WTC11 (cell line): ENCODE measurements at regions of chr7 and their contacts with region 1.

Region 1: DNA sequence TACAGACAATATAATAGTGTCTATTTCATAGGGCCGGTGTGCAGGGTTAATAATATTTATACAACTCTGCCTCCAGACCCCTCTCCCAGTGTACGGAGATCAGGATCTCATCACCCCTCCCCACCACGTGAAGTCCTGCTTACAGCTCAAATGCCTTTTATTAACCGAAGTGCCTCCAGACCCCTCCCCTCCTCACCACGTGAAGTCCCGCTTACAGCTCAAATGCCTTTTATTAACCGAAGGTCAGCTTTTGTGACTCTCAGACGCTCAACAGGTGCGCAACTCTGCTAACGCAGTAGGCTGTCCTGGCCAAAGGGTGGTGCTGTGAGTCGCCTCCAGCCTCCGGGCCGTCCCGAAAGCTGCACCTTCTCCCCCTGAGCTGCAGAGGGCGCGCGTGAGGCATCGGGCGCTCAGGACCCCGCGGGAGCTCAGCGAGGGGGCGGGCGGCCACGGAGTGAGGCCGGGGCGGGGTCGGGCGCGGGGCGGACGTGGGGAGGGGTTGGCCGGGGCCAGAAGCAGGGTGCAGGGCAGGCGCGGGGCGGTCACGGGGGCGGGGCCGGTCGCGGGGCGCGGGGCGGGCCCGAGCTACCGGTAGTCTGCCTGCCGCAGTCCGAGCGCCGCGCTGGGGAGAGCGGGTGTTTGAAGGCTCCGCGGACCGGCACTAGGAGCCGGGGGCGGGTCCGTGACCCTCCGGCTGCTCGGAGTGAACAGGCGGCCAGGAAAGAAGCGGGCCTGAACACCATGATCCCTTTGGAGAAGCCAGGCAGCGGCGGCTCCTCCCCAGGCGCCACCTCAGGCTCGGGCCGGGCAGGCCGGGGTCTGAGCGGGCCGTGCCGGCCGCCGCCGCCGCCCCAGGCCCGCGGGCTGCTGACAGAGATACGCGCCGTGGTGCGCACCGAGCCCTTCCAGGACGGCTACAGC is at the start of gene STK17A:
- DNase-seq: peak; percentile 92
- ATAC-seq: peak; percentile 93
- H3K4me3 Mint-ChIP-seq: peak within 1 kb of the TSS; percentile 85
- H3K27ac Mint-ChIP-seq: no peak within 1 kb of the TSS
- H3K4me1 Mint-ChIP-seq: peaks cover 41% of the 10 kb centered on the region
- H3K27me3 Mint-ChIP-seq: peaks cover 8% of the 10 kb centered on the region
- CTCF ChIP-seq: peak; percentile 91
- total RNA-seq, gene STK17A: 12.2 to 17.6 TPM (median 15.1 TPM) in 3 replicates

Region 2: DNA sequence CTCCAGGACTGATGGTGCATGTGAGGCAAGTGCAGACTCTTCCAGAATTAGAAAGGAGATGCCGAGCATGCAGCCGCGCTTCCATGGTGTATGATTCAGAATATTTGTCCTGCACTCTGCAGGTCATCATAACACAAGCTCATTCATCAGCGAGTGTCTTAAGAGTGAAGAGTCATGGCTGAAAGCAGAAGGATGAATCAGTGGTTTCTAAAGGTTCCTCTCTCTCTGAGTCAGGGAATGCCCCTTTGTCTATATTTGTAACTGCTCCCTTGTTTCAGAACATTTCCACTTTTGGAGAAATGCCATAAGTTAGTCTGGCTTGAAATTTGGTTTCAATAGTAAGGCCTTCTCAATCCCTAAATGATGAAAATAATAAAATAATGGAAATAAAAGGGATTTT is 418.0 kb before region 1 on chr7:
- CTCF ChIA-PET with region 1: no interaction called
- POLR2A ChIA-PET with region 1: no interaction called
- DNase-seq: no peak
- ATAC-seq: no peak
- H3K4me3 Mint-ChIP-seq: no peak overlapping the region
- H3K27ac Mint-ChIP-seq: no peak overlapping the region
- H3K4me1 Mint-ChIP-seq: peaks cover 2% of the 10 kb centered on the region
- H3K27me3 Mint-ChIP-seq: no peaks in the 10 kb centered on the region
- CTCF ChIP-seq: no peak

Region 3: DNA sequence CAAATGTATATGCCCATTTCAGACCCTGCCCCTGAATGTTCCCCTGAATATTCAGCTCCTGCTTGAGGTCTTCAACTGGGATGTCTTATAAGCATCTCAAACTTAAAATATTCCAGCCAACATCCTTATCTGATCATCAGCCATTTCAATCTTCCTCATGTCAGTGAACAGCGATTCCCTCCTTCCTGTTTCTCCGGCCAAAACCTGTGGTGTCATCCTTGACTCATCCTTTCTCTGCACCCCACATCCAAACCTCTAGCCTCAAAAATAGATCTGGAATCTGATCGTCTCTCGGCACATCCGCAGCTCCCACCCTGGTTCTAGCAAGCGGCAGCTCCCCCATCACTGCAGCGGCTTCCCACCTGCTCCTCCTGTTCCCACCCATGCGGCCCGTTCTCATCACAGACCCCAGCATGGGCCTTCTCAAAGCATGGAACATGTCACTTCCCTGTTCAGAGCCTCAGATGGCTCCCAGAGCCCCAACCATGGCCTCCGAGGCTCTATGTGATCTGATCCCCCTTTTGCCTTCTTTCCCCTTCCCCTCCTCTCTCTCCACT is 304.6 kb before region 1 on chr7:
- CTCF ChIA-PET with region 1: no interaction called
- POLR2A ChIA-PET with region 1: no interaction called
- DNase-seq: no peak
- ATAC-seq: no peak
- H3K4me3 Mint-ChIP-seq: no peak overlapping the region
- H3K27ac Mint-ChIP-seq: no peak overlapping the region
- H3K4me1 Mint-ChIP-seq: peaks cover 26% of the 10 kb centered on the region
- H3K27me3 Mint-ChIP-seq: peaks cover 4% of the 10 kb centered on the region; the same call in 1 of the 2 replicates
- CTCF ChIP-seq: no peak

Region 4: GRCh38 chr7:43405948-43406347 is 176.8 kb before region 1 on chr7:
- CTCF ChIA-PET with region 1: no interaction called
- POLR2A ChIA-PET with region 1: no interaction called
- DNase-seq: no peak
- ATAC-seq: peak; percentile 72
- H3K4me3 Mint-ChIP-seq: no peak overlapping the region
- H3K27ac Mint-ChIP-seq: no peak overlapping the region
- H3K4me1 Mint-ChIP-seq: peaks cover 26% of the 10 kb centered on the region
- H3K27me3 Mint-ChIP-seq: peaks cover 3% of the 10 kb centered on the region; the same call in 1 of the 2 replicates
- CTCF ChIP-seq: no peak

Region 5: GRCh38 chr7:43439631-43440401 is 142.9 kb before region 1 on chr7:
- CTCF ChIA-PET with region 1: interaction called, 11 read pairs
- POLR2A ChIA-PET with region 1: no interaction called
- DNase-seq: peak; percentile 79
- ATAC-seq: peak; percentile 94
- H3K4me3 Mint-ChIP-seq: no peak overlapping the region
- H3K27ac Mint-ChIP-seq: no peak overlapping the region
- H3K4me1 Mint-ChIP-seq: peaks cover 29% of the 10 kb centered on the region
- H3K27me3 Mint-ChIP-seq: no peaks in the 10 kb centered on the region; the same call in 1 of the 2 replicates
- CTCF ChIP-seq: peak; percentile 96

Region 6: DNA sequence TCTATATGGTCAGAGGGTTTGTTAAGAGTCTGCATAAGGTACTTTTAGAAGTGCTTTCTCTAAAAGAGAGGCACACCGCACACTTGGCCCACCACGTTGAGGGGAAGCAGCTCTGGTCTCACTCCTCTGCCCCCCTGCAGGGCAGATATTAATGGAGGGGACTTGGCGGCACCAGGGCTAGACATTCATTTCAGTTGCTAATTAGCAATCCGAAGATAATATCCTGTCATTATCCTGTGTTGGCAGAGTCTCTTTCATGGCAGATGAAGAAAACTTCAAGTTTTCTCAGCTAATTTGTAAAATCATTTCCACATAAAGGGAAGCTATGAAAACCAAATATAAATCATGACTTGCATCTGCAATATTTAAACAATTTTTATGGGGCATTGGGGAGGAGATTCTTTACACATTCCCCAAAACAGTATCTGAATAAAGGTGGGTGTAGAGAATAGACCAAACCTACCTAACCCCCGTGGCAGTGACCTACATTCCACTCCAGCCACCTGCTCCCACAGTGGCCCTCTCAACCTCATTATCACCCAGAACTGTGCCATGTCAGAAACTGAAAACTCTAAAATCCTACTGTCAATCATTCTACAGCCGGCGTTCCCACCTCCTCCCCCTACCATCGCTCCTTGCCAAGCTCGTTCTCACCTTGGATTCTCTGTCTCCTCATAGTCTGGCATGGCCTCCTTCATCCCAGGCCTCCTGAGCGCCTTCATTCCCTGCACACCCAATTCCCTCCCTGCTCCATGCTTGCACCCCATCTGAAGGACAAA is 54.0 kb before region 1 on chr7:
- CTCF ChIA-PET with region 1: interaction called, 13 read pairs
- POLR2A ChIA-PET with region 1: interaction called, 3 read pairs
- DNase-seq: no peak
- ATAC-seq: no peak
- H3K4me3 Mint-ChIP-seq: no peak overlapping the region
- H3K27ac Mint-ChIP-seq: no peak overlapping the region
- H3K4me1 Mint-ChIP-seq: peaks cover 9% of the 10 kb centered on the region; the same call in 1 of the 2 replicates
- H3K27me3 Mint-ChIP-seq: no peaks in the 10 kb centered on the region
- CTCF ChIP-seq: no peak

Region 7: GRCh38 chr7:43602271-43602670 is 19.5 kb after region 1 on chr7:
- CTCF ChIA-PET with region 1: interaction called, 15 read pairs
- POLR2A ChIA-PET with region 1: no interaction called
- DNase-seq: no peak
- ATAC-seq: no peak
- H3K4me3 Mint-ChIP-seq: no peak overlapping the region
- H3K27ac Mint-ChIP-seq: no peak overlapping the region
- H3K4me1 Mint-ChIP-seq: no peaks in the 10 kb centered on the region
- H3K27me3 Mint-ChIP-seq: no peaks in the 10 kb centered on the region
- CTCF ChIP-seq: no peak

Region 8: DNA sequence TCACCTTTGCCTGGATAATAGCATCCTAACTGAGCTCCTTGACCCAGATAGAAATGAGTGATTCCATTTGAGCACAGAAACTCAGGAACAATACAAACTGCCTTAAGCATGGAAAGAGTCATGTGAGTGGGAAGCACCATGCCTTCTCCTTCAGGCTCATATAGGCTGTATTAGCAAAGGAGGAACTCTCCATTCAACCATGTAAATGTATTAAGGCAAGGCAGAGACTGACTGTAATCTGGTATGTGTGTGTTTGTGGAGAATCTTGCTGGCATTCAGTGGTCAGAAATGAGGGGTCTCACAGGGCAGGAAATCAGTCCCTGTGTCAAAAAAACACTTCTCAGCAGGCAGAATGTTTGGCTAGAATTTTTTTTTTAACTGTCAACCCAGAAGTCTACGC is 106.4 kb after region 1 on chr7:
- CTCF ChIA-PET with region 1: interaction called, 20 read pairs
- POLR2A ChIA-PET with region 1: no interaction called
- DNase-seq: no peak
- ATAC-seq: no peak; the same call in 1 of the 2 replicates
- H3K4me3 Mint-ChIP-seq: no peak overlapping the region
- H3K27ac Mint-ChIP-seq: 0 out of 2 replicates have a peak overlapping the region, but pooled peaks have one; percentile 30
- H3K4me1 Mint-ChIP-seq: peaks cover 24% of the 10 kb centered on the region
- H3K27me3 Mint-ChIP-seq: no peaks in the 10 kb centered on the region
- CTCF ChIP-seq: no peak

Region 9: DNA sequence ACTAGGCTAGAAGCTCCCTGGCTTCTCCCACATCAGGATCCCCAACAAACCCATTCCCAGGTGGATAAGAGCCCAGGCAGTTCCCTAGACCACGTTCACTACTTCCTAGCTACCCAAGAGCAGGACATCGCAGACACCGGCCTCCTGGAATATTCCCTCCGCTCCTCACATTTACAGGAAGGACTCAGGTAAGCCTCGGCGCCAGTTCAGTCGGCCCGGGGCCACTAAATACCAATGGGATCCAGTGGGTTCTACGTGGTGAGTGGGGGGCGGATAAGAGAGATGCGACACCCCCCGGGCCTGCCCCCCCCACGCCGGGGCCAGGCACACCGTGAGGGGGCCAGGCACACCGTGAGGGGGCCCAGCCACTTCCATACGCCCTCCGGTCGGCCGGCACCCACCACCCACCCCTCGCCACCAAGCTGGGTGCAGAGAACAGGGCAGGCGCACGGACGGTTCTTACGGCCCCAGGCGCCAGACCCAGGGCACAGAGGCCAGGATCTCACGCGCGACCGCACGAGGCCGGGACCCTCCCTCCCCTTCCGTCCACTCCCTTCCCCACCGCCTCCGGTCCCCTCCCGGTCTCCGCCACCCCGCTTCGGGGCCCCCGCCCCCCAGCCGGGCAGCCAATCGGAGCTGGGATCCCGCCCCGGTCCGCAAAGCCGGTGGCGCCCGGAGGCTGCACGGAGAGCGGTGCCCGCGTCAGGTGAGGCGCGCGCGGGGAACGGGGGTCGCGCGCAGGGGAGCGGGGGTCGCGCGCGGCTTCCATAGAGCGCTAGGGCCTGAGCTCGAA is 175.5 kb after region 1 on chr7 and contains the start of gene BLVRA:
- CTCF ChIA-PET with region 1: interaction called, 19 read pairs
- POLR2A ChIA-PET with region 1: interaction called, 4 read pairs
- DNase-seq: peak; percentile 73
- ATAC-seq: peak; percentile 67
- H3K4me3 Mint-ChIP-seq: peak within 1 kb of the TSS; percentile 79
- H3K27ac Mint-ChIP-seq: no peak within 1 kb of the TSS; the same call in 1 of the 2 replicates
- H3K4me1 Mint-ChIP-seq: peaks cover 23% of the 10 kb centered on the region
- H3K27me3 Mint-ChIP-seq: peaks cover 34% of the 10 kb centered on the region
- CTCF ChIP-seq: no peak
- total RNA-seq, gene BLVRA: 31.9 to 35.5 TPM (median 33.7 TPM) in 3 replicates

Region 10: GRCh38 chr7:43834463-43835251 is 251.9 kb after region 1 on chr7:
- CTCF ChIA-PET with region 1: interaction called, 85 read pairs
- POLR2A ChIA-PET with region 1: interaction called, 5 read pairs
- DNase-seq: no peak
- ATAC-seq: no peak
- H3K4me3 Mint-ChIP-seq: no peak overlapping the region
- H3K27ac Mint-ChIP-seq: no peak overlapping the region
- H3K4me1 Mint-ChIP-seq: peaks cover 5% of the 10 kb centered on the region; the same call in 1 of the 2 replicates
- H3K27me3 Mint-ChIP-seq: no peaks in the 10 kb centered on the region
- CTCF ChIP-seq: no peak